ENCODE measurements at regions of chr22 and their contacts with region 1.

Region 1: DNA sequence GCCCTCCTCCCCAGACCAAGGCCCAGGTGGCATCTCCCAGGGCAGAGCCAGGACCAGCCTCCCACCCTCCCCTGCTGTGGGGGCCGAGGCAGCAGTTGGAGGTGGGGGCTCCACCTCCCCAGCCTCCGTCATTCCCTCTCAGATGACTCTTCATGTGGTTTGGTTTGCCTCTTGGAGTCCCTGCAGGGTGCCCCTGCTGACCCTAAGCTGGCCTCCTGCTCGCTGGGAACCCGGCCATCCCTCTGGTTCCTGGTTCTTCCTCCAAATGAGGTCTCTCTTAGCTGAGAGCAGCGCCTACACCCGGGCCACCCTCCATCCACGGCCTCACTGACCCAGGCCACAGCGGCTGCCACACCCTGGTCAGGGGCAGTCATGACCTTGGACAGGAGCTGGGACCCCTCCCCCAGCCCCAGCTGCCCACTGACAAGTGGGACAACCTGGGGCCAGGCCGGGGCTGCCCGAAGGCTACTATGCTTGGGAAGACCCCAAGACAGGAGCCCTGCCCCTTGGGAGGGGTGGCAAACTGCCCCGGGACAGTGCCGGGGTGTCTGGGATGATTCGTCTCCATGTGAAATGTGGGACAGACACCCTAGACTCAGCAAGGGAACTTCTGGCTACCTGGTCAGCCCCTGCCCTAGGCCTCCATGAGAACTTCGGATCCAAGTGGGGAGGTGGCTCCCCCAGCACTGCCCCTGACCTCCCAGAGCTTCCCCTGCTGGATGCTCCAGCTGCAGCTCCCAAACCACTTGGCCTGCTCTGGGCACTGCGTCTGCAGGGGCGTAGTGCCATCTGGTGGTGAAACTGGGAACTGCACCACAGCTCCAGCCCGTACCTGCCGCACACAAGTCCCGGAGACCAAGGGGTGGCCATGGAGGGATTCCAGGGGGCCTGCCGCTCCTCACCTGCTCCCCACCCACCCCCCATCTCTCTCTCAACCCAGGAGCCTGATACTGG is 194.5 kb downstream of the IGLL1 start:
- DNase-seq: peak; percentile 90
- ATAC-seq: peak; percentile 90
- H3K4me3 Mint-ChIP-seq: no peak overlapping the region
- H3K27ac Mint-ChIP-seq: no peak overlapping the region
- H3K4me1 Mint-ChIP-seq: no peaks in the 10 kb centered on the region
- H3K27me3 Mint-ChIP-seq: peaks cover 2% of the 10 kb centered on the region

Region 2: DNA sequence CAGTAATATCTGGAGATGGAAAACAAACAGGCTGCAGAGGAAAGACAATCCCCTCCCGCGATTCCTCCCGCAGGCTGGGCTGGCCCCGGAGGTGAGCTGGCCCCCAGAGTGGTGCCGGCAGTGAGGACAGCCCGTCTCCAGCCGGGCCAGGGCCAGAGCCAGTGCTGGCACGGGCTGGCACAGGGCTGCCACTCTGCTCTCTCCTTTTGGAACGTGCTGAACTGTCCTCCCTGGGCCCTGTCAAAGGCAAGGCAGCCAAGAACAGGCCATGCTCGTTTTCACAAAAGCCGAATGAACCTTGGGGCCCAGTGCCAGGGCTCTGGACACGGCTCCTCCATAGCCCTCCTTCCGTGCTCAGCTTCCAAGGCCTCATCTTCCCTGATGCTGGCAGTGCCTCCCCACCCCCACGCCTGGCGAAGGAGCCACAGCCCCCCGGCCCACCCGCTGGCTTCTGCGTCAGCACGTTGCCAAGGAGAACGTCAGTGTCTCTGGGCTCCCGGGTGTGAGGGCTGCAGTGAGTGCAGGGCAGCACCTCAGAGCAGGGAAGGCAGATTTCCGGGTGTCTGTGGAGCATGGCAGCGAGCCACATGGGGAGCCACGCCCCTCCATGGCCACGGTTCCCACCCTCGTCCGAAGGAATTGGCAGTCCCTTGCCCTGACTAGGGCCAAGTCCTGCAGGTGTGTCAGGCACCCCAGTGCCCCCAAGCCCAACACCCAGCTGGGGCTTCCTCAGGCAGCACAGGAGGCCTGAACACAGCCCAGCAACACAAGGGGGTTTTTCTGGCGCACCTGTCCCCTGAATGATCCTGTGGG is 286.6 kb before region 1 on chr22:
- CTCF ChIA-PET with region 1: no interaction called
- POLR2A ChIA-PET with region 1: no interaction called
- intact Hi-C with region 1: no loop called
- DNase-seq: no peak
- ATAC-seq: no peak
- H3K4me3 Mint-ChIP-seq: no peak overlapping the region
- H3K27ac Mint-ChIP-seq: no peak overlapping the region
- H3K4me1 Mint-ChIP-seq: no peaks in the 10 kb centered on the region
- H3K27me3 Mint-ChIP-seq: no peaks in the 10 kb centered on the region

Region 3: DNA sequence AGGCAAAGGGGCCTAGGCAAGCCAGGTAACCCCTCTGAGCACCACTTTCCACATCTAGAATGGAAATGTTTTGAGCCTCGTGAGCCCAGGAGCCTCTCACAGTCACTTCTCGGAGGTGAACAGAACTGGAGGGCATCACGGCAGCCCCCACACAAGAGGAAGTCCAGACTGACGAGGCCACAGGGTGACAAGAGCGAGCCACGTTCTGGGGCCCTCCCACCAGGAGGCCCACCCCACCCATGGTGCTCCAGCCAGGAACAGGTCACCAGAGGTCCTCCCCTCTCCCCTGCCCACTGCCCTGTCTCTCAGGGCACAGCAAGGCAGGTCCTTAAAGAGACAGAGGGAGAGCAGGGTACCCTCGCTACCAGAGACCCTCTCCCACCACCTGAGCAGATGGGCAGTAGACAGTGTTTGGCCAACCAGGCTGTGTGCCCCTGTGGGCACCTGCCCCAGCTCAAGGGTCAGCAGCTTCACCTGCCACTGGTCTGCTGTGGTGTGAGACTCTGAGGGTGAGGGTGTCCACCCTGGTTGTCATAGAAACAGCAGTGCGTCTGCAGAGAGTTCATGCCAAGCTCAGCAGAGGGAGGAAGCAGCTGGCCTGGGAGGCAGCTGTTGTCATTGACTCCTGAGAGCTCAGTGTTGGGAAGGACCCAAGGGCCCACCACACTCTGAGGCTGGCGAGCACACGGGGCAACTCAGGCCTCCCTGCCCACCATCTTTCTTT is 275.2 kb before region 1 on chr22:
- CTCF ChIA-PET with region 1: no interaction called
- POLR2A ChIA-PET with region 1: no interaction called
- intact Hi-C with region 1: no loop called
- DNase-seq: no peak
- ATAC-seq: no peak
- H3K4me3 Mint-ChIP-seq: no peak overlapping the region
- H3K27ac Mint-ChIP-seq: no peak overlapping the region
- H3K4me1 Mint-ChIP-seq: no peaks in the 10 kb centered on the region
- H3K27me3 Mint-ChIP-seq: no peaks in the 10 kb centered on the region

Region 4: GRCh38 chr22:23289851-23290724 is 95.5 kb before region 1 on chr22:
- CTCF ChIA-PET with region 1: interaction called, 5 read pairs
- POLR2A ChIA-PET with region 1: no interaction called
- intact Hi-C with region 1: loop called in 1 of 2 experiments (anchors 10 kb)
- DNase-seq: peak; percentile 75
- ATAC-seq: peak; percentile 63
- H3K4me3 Mint-ChIP-seq: no peak overlapping the region
- H3K27ac Mint-ChIP-seq: no peak overlapping the region
- H3K4me1 Mint-ChIP-seq: no peaks in the 10 kb centered on the region
- H3K27me3 Mint-ChIP-seq: no peaks in the 10 kb centered on the region

Region 5: GRCh38 chr22:23315341-23315917 is 70.1 kb before region 1 on chr22:
- CTCF ChIA-PET with region 1: no interaction called
- POLR2A ChIA-PET with region 1: no interaction called
- intact Hi-C with region 1: loop called (anchors 1 kb)
- DNase-seq: peak; percentile 65
- ATAC-seq: no peak
- H3K4me3 Mint-ChIP-seq: no peak overlapping the region
- H3K27ac Mint-ChIP-seq: no peak overlapping the region
- H3K4me1 Mint-ChIP-seq: no peaks in the 10 kb centered on the region
- H3K27me3 Mint-ChIP-seq: no peaks in the 10 kb centered on the region

Region 6: DNA sequence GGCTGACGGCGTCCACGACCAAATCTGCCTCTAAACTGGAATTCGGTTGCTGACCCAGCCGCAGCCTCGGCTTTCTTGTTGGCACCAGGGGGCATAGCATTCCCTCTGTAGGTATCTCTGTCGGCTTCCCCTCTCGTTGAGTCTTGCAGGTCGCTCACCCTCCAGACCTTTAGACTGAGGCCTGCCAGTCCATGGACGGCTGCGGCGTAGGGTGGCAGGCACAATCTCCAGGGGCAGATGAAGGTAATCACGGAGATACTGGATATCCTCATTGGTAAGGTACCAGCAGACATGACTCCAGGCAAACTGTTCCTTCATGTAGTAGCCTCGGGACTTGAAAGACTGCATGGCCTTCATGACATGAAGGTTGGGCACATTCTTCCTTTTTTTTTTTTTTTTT is 63.0 kb before region 1 on chr22:
- CTCF ChIA-PET with region 1: interaction called, 8 read pairs
- POLR2A ChIA-PET with region 1: no interaction called
- intact Hi-C with region 1: loop called in 1 of 2 experiments (anchors 2 kb)
- DNase-seq: no peak
- ATAC-seq: no peak
- H3K4me3 Mint-ChIP-seq: no peak overlapping the region
- H3K27ac Mint-ChIP-seq: no peak overlapping the region
- H3K4me1 Mint-ChIP-seq: peaks cover 11% of the 10 kb centered on the region
- H3K27me3 Mint-ChIP-seq: no peaks in the 10 kb centered on the region